K562 (cell line): ENCODE measurements at regions of chr2 and their contacts with region 1.

Region 1: DNA sequence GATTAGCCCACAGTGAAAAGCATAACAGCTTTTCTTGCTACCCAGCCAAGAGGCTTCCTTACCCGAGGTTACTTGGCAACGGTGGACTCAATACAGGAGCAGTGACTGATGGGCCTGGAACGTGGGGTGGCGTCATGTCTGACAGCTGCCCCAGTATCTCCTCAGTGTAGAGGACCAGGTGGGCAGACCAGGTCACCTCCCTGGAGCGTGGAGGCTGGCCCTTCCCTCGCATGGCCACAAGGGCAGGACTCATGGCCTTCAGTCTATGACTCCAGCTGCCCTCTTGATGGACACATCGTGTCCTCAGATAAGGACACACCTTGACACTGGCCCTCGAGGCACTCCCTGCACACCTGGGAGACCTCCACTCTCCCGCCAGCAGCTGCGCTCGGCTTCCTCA is 6.4 kb downstream of the ASPRV1 start:
- DNase-seq: no peak
- ATAC-seq: peak; percentile 62
- H3K4me3 ChIP-seq: no peak overlapping the region
- H3K27ac ChIP-seq: no peak overlapping the region
- H3K4me1 ChIP-seq: 0 out of 5 replicates have a peak, but pooled peaks cover 0 to 3% of the 10 kb centered on the region in 2 experiments
- H3K27me3 ChIP-seq: no peaks in the 10 kb centered on the region
- CTCF ChIP-seq: no peak
- EP300 ChIP-seq: no peak
- POLR2A ChIP-seq: no peak
- RAD21 ChIP-seq: no peak

Region 2: DNA sequence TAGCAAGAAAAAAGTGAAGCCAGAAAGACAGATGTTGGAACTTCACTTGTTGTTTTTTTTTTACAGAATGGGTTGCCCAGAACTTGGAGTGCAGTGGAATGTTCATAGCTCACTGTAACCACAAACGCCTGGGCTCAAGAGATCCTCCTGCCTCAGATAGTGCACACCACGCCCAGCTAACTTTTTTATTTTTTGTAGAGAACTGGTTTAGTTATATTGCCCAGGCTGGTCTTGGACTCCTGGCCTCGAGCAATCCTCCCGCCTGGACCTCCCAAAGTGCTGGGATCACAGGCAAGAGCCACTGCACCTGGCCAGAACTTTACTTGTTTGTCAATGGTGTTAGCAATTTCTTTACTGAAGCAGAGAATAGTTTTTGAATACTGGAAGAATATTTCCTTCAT is 18.3 kb after region 1 on chr2:
- CTCF ChIA-PET with region 1: no interaction called
- POLR2A ChIA-PET with region 1: interaction called, 11 read pairs
- in situ Hi-C with region 1: no loop called
- intact Hi-C with region 1: no loop called
- DNase-seq: peak; percentile 58 to 81 (median 59)
- ATAC-seq: peak; percentile 66
- H3K4me3 ChIP-seq: no peak overlapping the region
- H3K27ac ChIP-seq: peak overlapping the region; percentile 35
- H3K4me1 ChIP-seq: peaks cover 58 to 60% of the 10 kb centered on the region in 2 experiments
- H3K27me3 ChIP-seq: no peaks in the 10 kb centered on the region
- CTCF ChIP-seq: no peak
- EP300 ChIP-seq: peak; percentile 63
- POLR2A ChIP-seq: no peak
- RAD21 ChIP-seq: 0 out of 4 replicates have a peak, but pooled peaks of 1 of the 2 experiments have one; percentile 10

Region 3: GRCh38 chr2:70029814-70030409 is 74.9 kb after region 1 on chr2:
- CTCF ChIA-PET with region 1: no interaction called
- POLR2A ChIA-PET with region 1: no interaction called
- in situ Hi-C with region 1: no loop called
- intact Hi-C with region 1: no loop called
- DNase-seq: peak; percentile 80 to 92 (median 87)
- ATAC-seq: peak; percentile 96
- H3K4me3 ChIP-seq: no peak overlapping the region
- H3K27ac ChIP-seq: peak overlapping the region; percentile 76
- H3K4me1 ChIP-seq: peaks cover 17 to 27% of the 10 kb centered on the region in 2 experiments; a peak in 4 of 5 replicates
- H3K27me3 ChIP-seq: no peaks in the 10 kb centered on the region
- CTCF ChIP-seq: peak in 1 of 3 experiments; percentile 6; a peak in 1 of 6 replicates
- EP300 ChIP-seq: peak; percentile 34; the same call in 1 of the 2 replicates
- POLR2A ChIP-seq: peak; percentile 66
- RAD21 ChIP-seq: no peak; a peak in 1 of 4 replicates